Right ventricle myocardium inferior (tissue), 1 donor: ENCODE measurements at regions of chr15 and their contacts with region 1.

Region 1: GRCh38 chr15:73539212-73540125 is 93.7 kb downstream of the NPTN start:
- DNase-seq: no peak
- ATAC-seq: no peak

Region 2: DNA sequence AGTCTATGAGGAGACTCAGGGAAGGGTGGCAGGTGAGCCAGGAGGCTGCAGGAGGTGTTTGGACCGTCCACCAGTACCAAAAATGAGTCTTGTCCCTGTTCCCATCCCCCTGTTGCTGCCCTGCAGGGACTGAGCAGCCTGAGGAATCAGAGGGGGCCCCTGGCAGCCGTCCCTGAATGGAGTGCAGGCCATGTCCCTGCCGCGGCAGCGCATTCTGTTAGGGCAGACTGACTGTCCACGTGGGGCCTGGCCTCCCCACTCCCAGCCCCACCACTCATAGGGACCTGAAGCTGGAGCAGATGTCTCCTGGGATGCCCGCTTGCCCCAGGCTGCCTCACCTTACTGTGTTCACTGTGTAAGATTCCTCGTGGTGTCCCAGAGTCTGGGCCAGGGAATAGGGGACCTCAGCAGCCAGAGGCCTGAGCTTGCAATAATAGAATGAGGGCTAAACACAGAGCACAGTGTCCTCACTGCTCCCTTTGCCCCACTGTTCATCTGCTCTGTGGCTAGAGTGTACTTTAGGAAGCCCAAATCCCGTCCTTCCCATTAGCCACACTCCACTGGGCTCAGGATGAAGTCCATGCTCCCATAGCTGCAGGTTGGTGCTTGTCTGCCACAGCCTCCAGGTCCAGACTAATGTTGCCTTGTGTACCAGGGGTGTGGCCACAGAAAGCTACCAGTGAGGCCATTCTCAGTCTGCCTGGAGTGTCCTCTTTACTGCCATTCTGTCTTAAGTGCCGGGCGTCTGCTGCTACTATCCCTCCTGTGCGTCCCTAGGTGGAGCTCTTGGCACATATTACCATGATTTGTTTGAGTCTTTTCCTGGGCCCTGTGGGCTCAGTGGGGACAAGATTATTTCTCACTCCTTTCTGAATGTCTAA is 233.9 kb before region 1 on chr15:
- intact Hi-C with region 1: loop called (anchors 5 kb)
- DNase-seq: no peak
- ATAC-seq: peak; percentile 79

Region 3: GRCh38 chr15:73483053-73483452 is 56.4 kb before region 1 on chr15:
- intact Hi-C with region 1: no loop called
- DNase-seq: no peak
- ATAC-seq: no peak